Activated naive CD4-positive, alpha-beta T cell treated with anti-CD3 and anti-CD28 coated beads for 36 hours (primary cell): ENCODE measurements at regions of chrX and their contacts with region 1.

Region 1: GRCh38 chrX:134718105-134718965 is 60.1 kb upstream of the PLAC1 start:
- DNase-seq: no peak
- H3K4me3 Mint-ChIP-seq: no peak overlapping the region
- H3K27ac Mint-ChIP-seq: no peak overlapping the region
- H3K4me1 Mint-ChIP-seq: peaks cover 18% of the 10 kb centered on the region
- H3K27me3 Mint-ChIP-seq: no peaks in the 10 kb centered on the region

Region 2: GRCh38 chrX:134764212-134764785 is 46.0 kb after region 1 on chrX:
- CTCF ChIA-PET with region 1: no interaction called
- intact Hi-C with region 1: no loop called
- DNase-seq: no peak
- H3K4me3 Mint-ChIP-seq: no peak overlapping the region
- H3K27ac Mint-ChIP-seq: no peak overlapping the region
- H3K4me1 Mint-ChIP-seq: peaks cover 3% of the 10 kb centered on the region
- H3K27me3 Mint-ChIP-seq: no peaks in the 10 kb centered on the region

Region 3: GRCh38 chrX:134792077-134792476 is 73.7 kb after region 1 on chrX:
- CTCF ChIA-PET with region 1: no interaction called
- intact Hi-C with region 1: no loop called
- DNase-seq: no peak
- H3K4me3 Mint-ChIP-seq: no peak overlapping the region
- H3K27ac Mint-ChIP-seq: no peak overlapping the region
- H3K4me1 Mint-ChIP-seq: peaks cover 15% of the 10 kb centered on the region
- H3K27me3 Mint-ChIP-seq: no peaks in the 10 kb centered on the region

Region 4: GRCh38 chrX:134807039-134807731 is 88.8 kb after region 1 on chrX:
- CTCF ChIA-PET with region 1: interaction called, 3 read pairs
- intact Hi-C with region 1: loop called (anchors 1 kb)
- DNase-seq: peak; percentile 93
- H3K4me3 Mint-ChIP-seq: peak overlapping the region; percentile 92
- H3K27ac Mint-ChIP-seq: peak overlapping the region; percentile 95
- H3K4me1 Mint-ChIP-seq: peaks cover 14% of the 10 kb centered on the region
- H3K27me3 Mint-ChIP-seq: no peaks in the 10 kb centered on the region